Calu3 (cell line): ENCODE measurements at regions of chr5 and their contacts with region 1.

Region 1: DNA sequence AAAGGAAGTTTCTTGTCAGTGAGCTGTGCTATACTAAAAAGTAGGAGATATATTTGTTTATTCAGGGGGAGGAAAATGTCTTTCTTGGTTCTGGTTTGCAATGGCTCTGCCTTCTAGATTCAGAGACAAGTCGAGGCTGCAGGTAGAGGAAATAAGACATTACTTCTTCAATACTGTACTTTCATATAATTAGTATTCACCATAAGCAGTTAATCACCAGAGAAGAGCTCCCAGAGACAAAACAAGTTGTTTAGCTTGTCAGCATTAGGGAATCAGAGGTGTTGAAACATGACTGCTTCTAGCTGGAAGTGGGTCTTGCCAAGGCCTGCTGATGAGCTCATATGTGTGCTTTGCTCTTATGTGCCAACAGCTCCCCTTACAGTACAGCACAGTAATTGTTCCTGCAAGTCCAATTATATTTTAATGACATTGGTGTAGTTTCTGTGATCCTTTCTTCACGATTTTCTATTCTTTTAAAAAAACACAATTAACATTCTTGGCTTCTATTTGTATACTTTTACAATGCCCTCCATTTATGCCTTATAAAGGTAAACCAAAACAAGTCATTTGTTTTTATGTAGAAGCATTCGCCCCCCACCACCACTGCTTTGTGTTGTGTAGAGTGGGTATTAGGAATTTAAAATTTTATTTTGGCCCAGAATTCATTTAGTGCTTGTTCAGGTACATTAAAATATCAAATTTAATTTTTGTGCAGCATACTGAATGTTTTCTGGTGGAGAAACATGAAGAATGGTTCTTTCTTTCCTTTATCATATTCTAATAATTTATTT is 112.2 kb downstream of the RPS23 start:
- DNase-seq: peak; percentile 61
- H3K4me3 Mint-ChIP-seq: no peak overlapping the region
- H3K27ac Mint-ChIP-seq: peak overlapping the region; percentile 70
- H3K4me1 Mint-ChIP-seq: peaks cover 49% of the 10 kb centered on the region
- H3K27me3 Mint-ChIP-seq: no peaks in the 10 kb centered on the region
- CTCF ChIP-seq: peak; percentile 68

Region 2: GRCh38 chr5:81425569-81425968 is 740.4 kb before region 1 on chr5:
- CTCF ChIA-PET with region 1: interaction called, 14 read pairs
- intact Hi-C with region 1: loop called (anchors 2 kb)
- DNase-seq: no peak
- H3K4me3 Mint-ChIP-seq: no peak overlapping the region
- H3K27ac Mint-ChIP-seq: no peak overlapping the region
- H3K4me1 Mint-ChIP-seq: peaks cover 63% of the 10 kb centered on the region
- H3K27me3 Mint-ChIP-seq: no peaks in the 10 kb centered on the region
- CTCF ChIP-seq: peak; percentile 63

Region 3: GRCh38 chr5:81657389-81657788 is 508.5 kb before region 1 on chr5:
- CTCF ChIA-PET with region 1: no interaction called
- intact Hi-C with region 1: loop called (anchors 10 kb)
- DNase-seq: peak; percentile 83
- H3K4me3 Mint-ChIP-seq: no peak overlapping the region
- H3K27ac Mint-ChIP-seq: no peak overlapping the region
- H3K4me1 Mint-ChIP-seq: peaks cover 26% of the 10 kb centered on the region
- H3K27me3 Mint-ChIP-seq: no peaks in the 10 kb centered on the region
- CTCF ChIP-seq: no peak

Region 4: GRCh38 chr5:81856948-81857928 is 308.7 kb before region 1 on chr5:
- CTCF ChIA-PET with region 1: interaction called, 13 read pairs
- intact Hi-C with region 1: loop called (anchors 2 kb)
- DNase-seq: peak; percentile 86
- H3K4me3 Mint-ChIP-seq: peak overlapping the region; percentile 63
- H3K27ac Mint-ChIP-seq: peak overlapping the region; percentile 52
- H3K4me1 Mint-ChIP-seq: peaks cover 22% of the 10 kb centered on the region
- H3K27me3 Mint-ChIP-seq: no peaks in the 10 kb centered on the region
- CTCF ChIP-seq: no peak

Region 5: GRCh38 chr5:82100303-82101077 is 65.4 kb before region 1 on chr5:
- CTCF ChIA-PET with region 1: interaction called, 43 read pairs
- intact Hi-C with region 1: no loop called
- DNase-seq: peak; percentile 7
- H3K4me3 Mint-ChIP-seq: no peak overlapping the region
- H3K27ac Mint-ChIP-seq: peak overlapping the region; percentile 47
- H3K4me1 Mint-ChIP-seq: peaks cover 16% of the 10 kb centered on the region
- H3K27me3 Mint-ChIP-seq: no peaks in the 10 kb centered on the region
- CTCF ChIP-seq: no peak